Panc1 (cell line): ENCODE measurements at regions of chr1 and their contacts with region 1.

Region 1: DNA sequence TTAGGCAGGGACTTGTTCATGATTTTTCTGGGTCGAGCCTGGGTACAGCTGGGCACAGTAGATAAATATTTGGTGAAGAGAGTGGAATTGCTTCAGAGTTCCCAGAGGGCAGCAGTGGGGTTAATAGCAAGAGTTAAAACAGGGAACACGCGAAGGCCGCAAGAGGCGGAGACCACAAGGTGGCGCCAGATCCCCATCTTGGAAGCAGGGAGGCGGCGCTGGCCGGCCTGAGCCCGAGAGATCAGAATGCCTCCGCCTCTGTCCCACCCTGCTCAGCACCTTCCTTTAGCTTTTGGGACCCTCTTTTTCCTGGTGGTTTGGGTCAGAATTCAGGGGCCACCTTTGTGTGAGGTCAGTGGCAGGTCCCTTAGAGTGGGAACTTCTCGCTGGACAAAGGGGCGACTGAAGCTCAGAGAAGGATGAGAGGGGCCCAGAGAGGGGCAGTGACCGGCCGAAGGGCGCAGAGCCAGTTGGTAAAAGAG is 6.5 kb upstream of the PADI2 start:
- DNase-seq: peak; percentile 81
- ATAC-seq: peak; percentile 87
- H3K4me3 ChIP-seq: no peak overlapping the region
- H3K27ac ChIP-seq: peak overlapping the region; percentile 81
- H3K4me1 ChIP-seq: peaks cover 36% of the 10 kb centered on the region
- H3K27me3 ChIP-seq: no peaks in the 10 kb centered on the region
- CTCF ChIP-seq: peak; percentile 96

Region 2: GRCh38 chr1:16960560-16961296 is 165.1 kb before region 1 on chr1:
- CTCF ChIA-PET with region 1: no interaction called
- POLR2A ChIA-PET with region 1: no interaction called
- in situ Hi-C with region 1: no loop called
- intact Hi-C with region 1: no loop called
- DNase-seq: peak; percentile 38
- ATAC-seq: peak; percentile 96
- H3K4me3 ChIP-seq: peak overlapping the region; percentile 43 to 57
- H3K27ac ChIP-seq: peak overlapping the region; percentile 64; the same call in 1 of the 2 replicates
- H3K4me1 ChIP-seq: peaks cover 5% of the 10 kb centered on the region
- H3K27me3 ChIP-seq: no peaks in the 10 kb centered on the region
- CTCF ChIP-seq: peak; percentile 95

Region 3: DNA sequence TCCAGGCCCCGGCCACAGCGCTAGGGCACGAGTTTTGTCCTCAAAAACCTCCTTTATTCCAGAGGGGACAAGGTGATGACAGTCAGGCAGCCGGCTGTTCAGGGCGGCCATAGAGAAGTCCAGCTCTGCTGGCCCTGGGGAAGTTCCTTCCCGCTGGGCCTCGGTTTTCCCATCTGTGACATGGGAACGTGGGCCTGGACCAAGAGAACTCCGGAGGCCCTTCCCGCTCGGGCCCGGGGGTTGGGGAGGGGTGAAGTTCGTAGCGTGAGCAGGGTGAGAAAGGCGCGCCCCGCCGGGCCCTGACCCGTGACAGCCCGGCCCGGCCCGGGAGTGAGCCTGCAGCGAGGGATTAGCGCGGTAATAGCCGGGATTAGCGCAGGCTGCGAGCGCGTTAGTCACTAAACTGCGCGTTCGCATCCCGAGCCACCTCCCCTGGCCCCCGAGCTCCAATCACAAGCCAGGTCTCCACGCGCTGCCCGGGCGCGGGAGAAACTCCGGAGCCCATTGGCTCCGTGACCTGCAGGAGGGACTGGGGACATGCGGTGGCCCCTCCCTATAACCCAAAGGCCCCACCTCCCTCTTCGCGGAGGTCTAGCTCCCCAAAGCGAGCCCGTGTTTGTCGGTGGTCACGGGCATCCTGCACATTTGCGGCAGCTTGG is 23.3 kb after region 1 on chr1:
- CTCF ChIA-PET with region 1: no interaction called
- POLR2A ChIA-PET with region 1: no interaction called
- in situ Hi-C with region 1: no loop called
- intact Hi-C with region 1: no loop called
- DNase-seq: no peak
- ATAC-seq: no peak
- H3K4me3 ChIP-seq: no peak overlapping the region
- H3K27ac ChIP-seq: peak overlapping the region; percentile 36; the same call in 1 of the 2 replicates
- H3K4me1 ChIP-seq: peaks cover 4% of the 10 kb centered on the region; the same call in 1 of the 2 replicates
- H3K27me3 ChIP-seq: no peaks in the 10 kb centered on the region
- CTCF ChIP-seq: no peak

Region 4: GRCh38 chr1:17335821-17336710 is 210.3 kb after region 1 on chr1:
- CTCF ChIA-PET with region 1: no interaction called
- POLR2A ChIA-PET with region 1: no interaction called
- in situ Hi-C with region 1: no loop called
- intact Hi-C with region 1: loop called (anchors 5 kb)
- DNase-seq: peak; percentile 39
- ATAC-seq: peak; percentile 96
- H3K4me3 ChIP-seq: peak overlapping the region in 1 of 2 experiments; percentile 18; a peak in 1 of 4 replicates
- H3K27ac ChIP-seq: no peak overlapping the region; the same call in 1 of the 2 replicates
- H3K4me1 ChIP-seq: peaks cover 9% of the 10 kb centered on the region; the same call in 1 of the 2 replicates
- H3K27me3 ChIP-seq: no peaks in the 10 kb centered on the region
- CTCF ChIP-seq: peak; percentile 97

Region 5: GRCh38 chr1:17405898-17406759 is 280.3 kb after region 1 on chr1:
- CTCF ChIA-PET with region 1: interaction called, 4 read pairs
- POLR2A ChIA-PET with region 1: interaction called, 5 read pairs
- in situ Hi-C with region 1: no loop called
- intact Hi-C with region 1: loop called (anchors 5 kb)
- DNase-seq: peak; percentile 45
- ATAC-seq: peak; percentile 91
- H3K4me3 ChIP-seq: no peak overlapping the region
- H3K27ac ChIP-seq: peak overlapping the region; percentile 48; the same call in 1 of the 2 replicates
- H3K4me1 ChIP-seq: peaks cover 18% of the 10 kb centered on the region
- H3K27me3 ChIP-seq: no peaks in the 10 kb centered on the region
- CTCF ChIP-seq: peak; percentile 91